H1 (cell line): ENCODE measurements at regions of chr20 and their contacts with region 1.

Region 1: DNA sequence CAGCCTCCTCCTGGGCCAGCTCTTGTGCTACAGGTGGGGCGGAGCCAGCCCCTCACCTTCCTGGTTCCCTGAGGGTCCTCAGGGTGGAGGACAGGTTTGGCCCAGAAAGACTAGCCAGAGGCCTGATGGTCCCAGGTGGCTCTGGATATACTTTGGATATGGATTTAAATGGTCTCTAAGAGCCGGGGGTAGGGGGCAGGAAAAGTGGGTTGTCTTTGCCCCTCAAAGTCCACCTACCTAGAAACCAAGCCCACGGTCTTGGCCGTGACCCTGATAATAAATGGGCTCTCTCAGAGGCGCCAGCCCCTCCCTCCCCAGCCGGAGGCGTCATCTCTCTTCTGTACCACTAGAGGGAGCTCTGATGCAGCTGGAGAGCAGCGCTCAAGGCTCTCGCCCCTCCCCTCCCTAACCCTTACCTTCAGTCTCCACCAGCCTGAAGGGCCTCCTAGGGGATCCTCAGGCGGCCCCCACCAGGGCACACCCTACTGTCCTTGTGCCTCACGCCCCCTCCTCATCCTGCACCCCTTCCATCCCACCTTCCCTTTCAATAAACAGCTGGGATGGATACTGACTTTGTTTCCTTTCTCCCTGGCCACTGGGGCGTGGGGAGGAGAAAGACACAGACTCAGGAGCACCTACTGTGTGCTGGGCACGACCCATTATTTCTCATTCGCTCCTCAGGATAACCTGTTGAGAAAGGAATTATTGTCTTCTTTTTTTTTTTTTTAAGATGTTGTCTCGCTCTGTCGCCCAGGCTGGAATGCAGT is 7.6 kb downstream of the NRSN2 start:
- DNase-seq: peak in 1 of 2 experiments; percentile 92
- H3K4me3 ChIP-seq: no peak overlapping the region
- H3K27ac ChIP-seq: no peak overlapping the region
- H3K4me1 ChIP-seq: peaks cover 0 to under 1% (median 0%) of the 10 kb centered on the region in 4 experiments; a peak in 1 of 7 replicates
- H3K27me3 ChIP-seq: no peaks in the 10 kb centered on the region
- CTCF ChIP-seq: peak; percentile 87 to 98 (median 96)
- EP300 ChIP-seq: no peak
- POLR2A ChIP-seq: no peak
- RAD21 ChIP-seq: peak; percentile 97

Region 2: GRCh38 chr20:371755-372542 is 17.5 kb after region 1 on chr20:
- CTCF ChIA-PET with region 1: interaction called, 41 read pairs
- POLR2A ChIA-PET with region 1: interaction called, 49 read pairs
- DNase-seq: no peak
- H3K4me3 ChIP-seq: no peak overlapping the region
- H3K27ac ChIP-seq: no peak overlapping the region
- H3K4me1 ChIP-seq: peaks cover 0 to 5% (median 0%) of the 10 kb centered on the region in 4 experiments; a peak in 2 of 7 replicates
- H3K27me3 ChIP-seq: no peaks in the 10 kb centered on the region; a peak in 1 of 7 replicates
- CTCF ChIP-seq: no peak
- EP300 ChIP-seq: no peak
- POLR2A ChIP-seq: no peak
- RAD21 ChIP-seq: no peak

Region 3: GRCh38 chr20:391041-391711 is 36.7 kb after region 1 on chr20:
- CTCF ChIA-PET with region 1: interaction called, 14 read pairs
- POLR2A ChIA-PET with region 1: interaction called, 5 read pairs
- DNase-seq: no peak
- H3K4me3 ChIP-seq: no peak overlapping the region
- H3K27ac ChIP-seq: no peak overlapping the region
- H3K4me1 ChIP-seq: no peaks in the 10 kb centered on the region
- H3K27me3 ChIP-seq: no peaks in the 10 kb centered on the region
- CTCF ChIP-seq: no peak
- EP300 ChIP-seq: no peak
- POLR2A ChIP-seq: no peak
- RAD21 ChIP-seq: no peak

Region 4: DNA sequence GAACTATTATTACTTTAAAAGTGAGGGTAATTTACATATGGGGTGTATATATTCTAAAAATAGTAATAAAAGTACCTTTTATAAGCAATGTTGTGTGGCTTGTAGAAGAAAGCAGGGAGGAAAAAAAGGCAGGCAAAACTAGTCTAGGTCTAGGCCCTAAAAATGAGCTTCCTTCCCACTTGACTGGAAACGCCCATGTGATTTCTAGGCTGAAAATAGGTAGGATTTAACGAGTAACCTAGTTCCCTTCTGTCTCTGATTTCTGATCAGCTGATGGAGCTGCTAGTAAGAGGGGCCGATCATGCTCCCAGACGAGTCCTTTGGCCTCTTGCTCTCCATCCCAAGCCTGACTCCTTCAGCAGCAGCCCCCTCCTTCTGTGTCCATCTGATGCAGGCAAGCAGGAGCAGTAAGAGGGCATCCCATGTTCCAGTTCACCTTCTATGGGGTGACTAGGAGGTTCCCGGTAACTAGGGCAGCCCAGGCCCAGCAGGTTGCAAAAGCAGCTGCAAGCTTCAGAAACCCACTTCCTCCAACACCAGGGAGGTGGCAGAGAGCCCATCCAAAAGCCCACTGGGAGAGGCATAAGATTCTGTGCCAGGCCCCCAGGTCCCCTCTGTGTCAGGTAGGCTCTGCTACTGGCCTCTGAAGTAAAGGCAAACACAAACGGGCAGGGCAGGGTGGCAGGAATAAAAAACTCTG is 83.5 kb after region 1 on chr20:
- CTCF ChIA-PET with region 1: interaction called, 52 read pairs
- POLR2A ChIA-PET with region 1: interaction called, 3 read pairs
- DNase-seq: no peak
- H3K4me3 ChIP-seq: no peak overlapping the region
- H3K27ac ChIP-seq: no peak overlapping the region
- H3K4me1 ChIP-seq: peaks cover 0 to 13% (median 5%) of the 10 kb centered on the region in 4 experiments; a peak in 6 of 7 replicates
- H3K27me3 ChIP-seq: peaks cover 0 to 11% (median 2%) of the 10 kb centered on the region in 4 experiments; a peak in 4 of 7 replicates
- CTCF ChIP-seq: no peak
- EP300 ChIP-seq: no peak
- POLR2A ChIP-seq: no peak
- RAD21 ChIP-seq: no peak

Region 5: GRCh38 chr20:478949-479429 is 124.5 kb after region 1 on chr20:
- CTCF ChIA-PET with region 1: interaction called, 36 read pairs
- POLR2A ChIA-PET with region 1: interaction called, 6 read pairs
- DNase-seq: no peak
- H3K4me3 ChIP-seq: no peak overlapping the region
- H3K27ac ChIP-seq: no peak overlapping the region
- H3K4me1 ChIP-seq: no peaks in the 10 kb centered on the region
- H3K27me3 ChIP-seq: no peaks in the 10 kb centered on the region
- CTCF ChIP-seq: peak in 2 of 3 experiments; percentile 43 to 51; a peak in 2 of 4 replicates
- EP300 ChIP-seq: no peak
- POLR2A ChIP-seq: no peak
- RAD21 ChIP-seq: peak; percentile 50 to 60